Pancreas (tissue), 10 donors: ENCODE measurements at regions of chr6 and their contacts with region 1.

Region 1: GRCh38 chr6:32933636-32934085 is 7.2 kb downstream of the HLA-DMB start:
- DNase-seq: peak in 5 of 6 donors; percentile 55 to 86 (median 71)
- ATAC-seq: peak; percentile 43 to 86 (median 80)
- H3K4me3 ChIP-seq: no peak overlapping the region
- H3K27ac ChIP-seq: no peak overlapping the region
- H3K4me1 ChIP-seq: no peaks in the 10 kb centered on the region
- H3K27me3 ChIP-seq: no peaks in the 10 kb centered on the region
- CTCF ChIP-seq: peak; percentile 47 to 69 (median 62)

Region 2: DNA sequence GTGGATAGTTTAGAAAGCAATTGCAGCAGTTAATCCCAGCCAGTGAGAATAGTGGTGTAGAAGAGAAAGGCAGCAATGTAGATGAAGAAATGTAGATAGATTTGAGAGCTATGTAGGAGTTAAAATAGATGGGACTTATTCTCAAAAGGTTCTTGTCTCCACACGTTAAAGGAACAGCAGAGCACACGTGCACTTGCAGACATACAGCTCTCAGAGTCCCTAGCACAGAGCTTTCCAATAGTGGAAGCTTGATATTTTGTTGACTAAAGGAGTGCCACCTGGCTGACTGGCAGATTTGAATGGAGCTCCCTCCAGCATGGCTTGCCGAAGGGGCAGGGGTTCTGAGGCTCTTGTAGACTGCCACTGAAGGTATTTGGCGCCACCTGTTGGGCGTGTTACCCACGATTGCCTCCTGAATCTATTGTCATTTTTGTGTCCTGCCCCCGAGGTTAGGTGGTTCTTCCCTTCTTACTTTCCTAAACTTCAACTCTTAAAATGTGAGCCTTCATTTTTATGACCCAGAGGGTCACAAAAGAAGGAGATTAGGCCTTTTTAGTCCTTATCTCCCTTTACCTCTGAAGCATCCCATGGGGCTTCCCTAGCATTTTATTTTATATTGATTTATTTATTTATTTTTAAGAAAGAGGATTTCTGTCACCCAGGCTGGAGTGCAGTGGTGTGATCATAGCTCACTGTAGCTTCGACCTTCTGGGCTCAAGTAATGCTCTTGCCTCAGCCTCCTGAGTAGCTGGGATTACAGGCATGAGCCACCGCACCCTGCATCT is 51.1 kb after region 1 on chr6:
- intact Hi-C with region 1: loop called in 2 of 3 experiments (anchors 5 to 10 kb)
- DNase-seq: peak; percentile 92 to 95 (median 94)
- ATAC-seq: peak; percentile 82 to 95 (median 91)
- H3K4me3 ChIP-seq: no peak overlapping the region
- H3K27ac ChIP-seq: peak overlapping the region in 2 of 4 donors; percentile 38 to 48
- H3K4me1 ChIP-seq: peaks cover 15 to 27% (median 23%) of the 10 kb centered on the region in 3 donors
- H3K27me3 ChIP-seq: no peaks in the 10 kb centered on the region
- CTCF ChIP-seq: peak; percentile 62 to 83 (median 76)